ENCODE measurements at regions of chr17 and their contacts with region 1.

Region 1: GRCh38 chr17:7915611-7916382 is at the start of gene RNF227:
- DNase-seq: peak; percentile 71 to 88 (median 79)
- H3K4me3 ChIP-seq: peak within 1 kb of the TSS; percentile 27 to 66 (median 34)
- H3K4me3 Mint-ChIP-seq: peak within 1 kb of the TSS; percentile 86 to 89
- H3K27ac ChIP-seq: peak within 1 kb of the TSS; percentile 81 to 87
- H3K27ac Mint-ChIP-seq: peak within 1 kb of the TSS; percentile 83 to 96 (median 94)
- H3K4me1 ChIP-seq: peaks cover 23 to 32% of the 10 kb centered on the region in 2 donors
- H3K4me1 Mint-ChIP-seq: peaks cover 39% of the 10 kb centered on the region
- H3K27me3 ChIP-seq: no peaks in the 10 kb centered on the region
- H3K27me3 Mint-ChIP-seq: peaks cover 0 to 3% (median 1%) of the 10 kb centered on the region in 3 donors
- CTCF ChIP-seq: no peak
- polyA plus RNA-seq, gene RNF227: 0.59 to 6.7 (median 1.3) TPM

Region 2: GRCh38 chr17:7956228-7956965 is 40.6 kb after region 1 on chr17:
- intact Hi-C with region 1: no loop called
- DNase-seq: peak in 1 of 3 donors; percentile 12
- H3K4me3 ChIP-seq: no peak overlapping the region
- H3K4me3 Mint-ChIP-seq: no peak overlapping the region
- H3K27ac ChIP-seq: no peak overlapping the region
- H3K27ac Mint-ChIP-seq: peak overlapping the region in 2 of 7 donors; percentile 5 to 30
- H3K4me1 ChIP-seq: peaks cover 6 to 18% of the 10 kb centered on the region in 2 donors
- H3K4me1 Mint-ChIP-seq: peaks cover 28% of the 10 kb centered on the region
- H3K27me3 ChIP-seq: no peaks in the 10 kb centered on the region
- H3K27me3 Mint-ChIP-seq: no peaks in the 10 kb centered on the region
- CTCF ChIP-seq: no peak

Region 3: GRCh38 chr17:7989781-7990655 is 74.2 kb after region 1 on chr17:
- intact Hi-C with region 1: loop called (anchors 1 to 2 kb)
- DNase-seq: peak; percentile 68 to 73 (median 70)
- H3K4me3 ChIP-seq: peak overlapping the region; percentile 47 to 84 (median 50)
- H3K4me3 Mint-ChIP-seq: peak overlapping the region; percentile 73 to 85
- H3K27ac ChIP-seq: peak overlapping the region; percentile 54 to 65
- H3K27ac Mint-ChIP-seq: peak overlapping the region in 5 of 7 donors; percentile 22 to 87 (median 77)
- H3K4me1 ChIP-seq: peaks cover 21 to 29% of the 10 kb centered on the region in 2 donors
- H3K4me1 Mint-ChIP-seq: peaks cover 23% of the 10 kb centered on the region
- H3K27me3 ChIP-seq: no peaks in the 10 kb centered on the region
- H3K27me3 Mint-ChIP-seq: no peaks in the 10 kb centered on the region
- CTCF ChIP-seq: peak; percentile 99